H1 (cell line): ENCODE measurements at regions of chr2 and their contacts with region 1.

Region 1: GRCh38 chr2:239293775-239294430 is 106.9 kb downstream of the HDAC4 start:
- DNase-seq: no peak
- H3K4me3 ChIP-seq: no peak overlapping the region
- H3K27ac ChIP-seq: peak overlapping the region; percentile 21; the same call in 1 of the 2 replicates
- H3K4me1 ChIP-seq: peaks cover 28 to 60% (median 44%) of the 10 kb centered on the region in 4 experiments
- H3K27me3 ChIP-seq: no peaks in the 10 kb centered on the region
- CTCF ChIP-seq: no peak
- EP300 ChIP-seq: no peak
- POLR2A ChIP-seq: no peak
- RAD21 ChIP-seq: no peak

Region 2: GRCh38 chr2:239204136-239204875 is 89.6 kb before region 1 on chr2:
- CTCF ChIA-PET with region 1: no interaction called
- POLR2A ChIA-PET with region 1: no interaction called
- DNase-seq: no peak
- H3K4me3 ChIP-seq: no peak overlapping the region
- H3K27ac ChIP-seq: no peak overlapping the region
- H3K4me1 ChIP-seq: peaks cover 0 to 12% (median 3%) of the 10 kb centered on the region in 4 experiments; a peak in 4 of 7 replicates
- H3K27me3 ChIP-seq: no peaks in the 10 kb centered on the region
- CTCF ChIP-seq: no peak
- EP300 ChIP-seq: no peak
- POLR2A ChIP-seq: no peak
- RAD21 ChIP-seq: no peak

Region 3: DNA sequence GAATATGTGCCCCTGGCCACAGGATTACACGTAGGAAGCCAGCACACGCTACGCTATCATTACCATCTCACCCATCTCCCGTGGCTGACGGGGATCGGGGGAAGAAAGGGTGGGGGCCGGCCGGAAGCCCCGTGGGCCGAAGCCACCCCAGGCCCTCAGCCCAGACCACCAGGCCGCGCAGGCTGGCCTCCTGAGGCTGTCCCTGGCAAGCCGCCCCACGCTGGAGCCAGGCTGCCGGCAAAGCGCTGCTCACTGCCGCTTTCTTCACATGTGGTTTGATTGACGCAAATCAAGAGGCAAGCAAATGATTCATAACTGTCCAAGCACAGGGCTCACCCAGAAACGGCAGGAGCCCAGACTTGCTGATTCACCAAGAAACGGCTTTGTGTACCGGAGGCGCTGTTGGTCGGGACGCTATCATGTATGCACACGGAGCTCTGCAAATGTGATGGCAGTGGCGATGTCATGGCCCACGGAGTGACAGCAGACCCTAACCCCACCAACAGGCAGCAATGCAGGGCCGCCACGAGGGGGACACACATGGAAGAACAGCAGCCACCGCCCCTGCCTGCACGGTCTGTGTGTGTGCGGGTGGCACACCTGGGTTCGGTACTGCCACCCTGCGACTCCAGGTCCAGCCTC is 18.7 kb before region 1 on chr2:
- CTCF ChIA-PET with region 1: interaction called, 44 read pairs
- POLR2A ChIA-PET with region 1: interaction called, 5 read pairs
- DNase-seq: no peak
- H3K4me3 ChIP-seq: no peak overlapping the region
- H3K27ac ChIP-seq: no peak overlapping the region
- H3K4me1 ChIP-seq: peaks cover 0 to 6% (median 1%) of the 10 kb centered on the region in 4 experiments; a peak in 1 of 7 replicates
- H3K27me3 ChIP-seq: no peaks in the 10 kb centered on the region
- CTCF ChIP-seq: no peak
- EP300 ChIP-seq: no peak
- POLR2A ChIP-seq: no peak
- RAD21 ChIP-seq: no peak

Region 4: GRCh38 chr2:239465017-239466001 is 171.4 kb after region 1 on chr2:
- CTCF ChIA-PET with region 1: no interaction called
- POLR2A ChIA-PET with region 1: no interaction called
- DNase-seq: no peak
- H3K4me3 ChIP-seq: no peak overlapping the region
- H3K27ac ChIP-seq: no peak overlapping the region
- H3K4me1 ChIP-seq: no peaks in the 10 kb centered on the region
- H3K27me3 ChIP-seq: no peaks in the 10 kb centered on the region
- CTCF ChIP-seq: no peak
- EP300 ChIP-seq: no peak
- POLR2A ChIP-seq: no peak
- RAD21 ChIP-seq: no peak

Region 5: GRCh38 chr2:239660390-239661230 is 366.7 kb after region 1 on chr2:
- CTCF ChIA-PET with region 1: no interaction called
- POLR2A ChIA-PET with region 1: no interaction called
- DNase-seq: no peak
- H3K4me3 ChIP-seq: no peak overlapping the region
- H3K27ac ChIP-seq: no peak overlapping the region
- H3K4me1 ChIP-seq: no peaks in the 10 kb centered on the region; a peak in 2 of 7 replicates
- H3K27me3 ChIP-seq: peaks cover 0 to 2% (median 0%) of the 10 kb centered on the region in 4 experiments; a peak in 2 of 7 replicates
- CTCF ChIP-seq: no peak
- EP300 ChIP-seq: no peak
- POLR2A ChIP-seq: no peak
- RAD21 ChIP-seq: no peak